HEK293T (cell line): ENCODE measurements at regions of chr1 and their contacts with region 1.

Region 1: DNA sequence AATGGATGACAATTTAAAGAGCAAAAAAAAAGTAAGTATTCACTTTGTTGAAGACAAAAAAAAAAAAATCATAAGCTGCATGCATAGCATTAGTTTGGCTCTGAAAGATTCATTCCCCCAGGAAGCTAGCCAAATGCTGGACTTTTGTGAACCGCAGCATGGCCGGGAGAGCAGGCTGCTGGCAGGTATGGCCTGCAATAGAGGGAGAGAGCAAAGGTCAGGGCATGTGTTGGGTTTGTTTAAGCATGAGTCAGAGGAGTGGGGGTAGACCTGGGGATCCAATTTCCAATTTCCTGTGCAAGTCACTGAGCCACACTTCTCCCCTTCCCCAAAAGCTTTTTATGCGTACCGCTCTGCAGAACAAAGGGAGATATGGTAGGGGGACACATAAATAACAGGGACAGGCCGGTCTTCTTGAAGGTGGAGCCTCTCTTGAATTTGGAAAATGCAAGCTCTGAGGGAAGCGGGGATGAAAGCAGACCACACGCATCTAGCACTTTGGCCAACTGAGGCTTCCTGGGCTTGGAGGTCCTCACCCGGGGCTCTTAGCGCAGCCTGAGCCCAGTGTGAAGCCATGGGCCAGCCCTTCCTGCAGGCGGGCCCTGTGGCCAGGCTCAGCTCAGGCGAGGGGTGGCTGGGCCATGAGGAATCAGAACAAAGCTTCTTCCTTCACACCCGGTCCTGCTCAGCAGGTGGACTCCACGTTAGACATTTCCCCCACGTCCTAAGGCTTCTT is 171.1 kb downstream of the TOMM20 start:
- DNase-seq: peak; percentile 69

Region 2: GRCh38 chr1:234944439-234945344 is 12.8 kb before region 1 on chr1:
- CTCF ChIA-PET with region 1: no interaction called
- POLR2A ChIA-PET with region 1: no interaction called
- DNase-seq: no peak

Region 3: GRCh38 chr1:234970731-234971476 is 13.4 kb after region 1 on chr1:
- CTCF ChIA-PET with region 1: interaction called, 4 read pairs
- POLR2A ChIA-PET with region 1: interaction called, 18 read pairs
- DNase-seq: no peak

Region 4: GRCh38 chr1:234978397-234979295 is 21.1 kb after region 1 on chr1:
- CTCF ChIA-PET with region 1: interaction called, 3 read pairs
- POLR2A ChIA-PET with region 1: interaction called, 15 read pairs
- DNase-seq: no peak

Region 5: GRCh38 chr1:235011599-235012435 is 54.3 kb after region 1 on chr1:
- CTCF ChIA-PET with region 1: no interaction called
- POLR2A ChIA-PET with region 1: no interaction called
- DNase-seq: no peak

Region 6: DNA sequence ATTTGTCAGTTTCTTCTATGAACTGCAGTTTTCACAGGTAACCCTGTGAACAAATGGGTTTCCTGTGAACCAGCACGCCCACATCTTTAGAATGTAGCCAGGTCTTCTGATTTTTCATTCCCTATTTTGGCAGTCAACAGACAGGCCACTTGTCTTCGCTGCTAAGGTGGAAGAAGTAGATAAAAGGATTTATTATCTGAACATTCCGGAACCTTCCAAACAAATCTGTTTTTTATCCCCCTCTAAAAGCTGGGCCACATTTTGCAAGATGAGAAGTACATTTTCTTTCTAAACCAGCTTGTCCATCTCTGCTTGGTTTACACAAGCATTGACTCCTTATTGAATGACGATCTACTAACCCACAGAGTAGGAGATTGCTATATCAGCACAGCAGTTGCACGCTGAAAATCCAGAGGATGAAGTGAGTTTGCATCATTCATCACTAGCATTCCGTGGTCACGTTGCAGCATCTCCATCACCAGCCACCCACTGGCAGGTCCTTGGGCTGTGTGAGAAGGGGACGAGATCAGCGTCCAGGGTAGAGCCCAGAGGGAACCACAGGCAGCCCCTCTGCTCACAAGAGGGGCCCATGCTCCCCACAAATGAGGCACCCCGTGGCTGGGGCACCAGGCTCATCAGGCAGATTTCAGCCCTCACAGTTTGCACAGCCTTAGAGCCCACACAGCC is 87.7 kb after region 1 on chr1:
- CTCF ChIA-PET with region 1: no interaction called
- POLR2A ChIA-PET with region 1: no interaction called
- DNase-seq: no peak

Region 7: GRCh38 chr1:235077571-235078479 is 120.3 kb after region 1 on chr1:
- CTCF ChIA-PET with region 1: no interaction called
- POLR2A ChIA-PET with region 1: no interaction called
- DNase-seq: no peak